IMR-90 (cell line): ENCODE measurements at regions of chr6 and their contacts with region 1.

Region 1: GRCh38 chr6:25369433-25370181 is 90.4 kb downstream of the CARMIL1 start:
- DNase-seq: no peak
- ATAC-seq: no peak
- H3K4me3 ChIP-seq: no peak overlapping the region
- H3K27ac ChIP-seq: no peak overlapping the region
- H3K4me1 ChIP-seq: no peaks in the 10 kb centered on the region; the same call in 1 of the 2 replicates
- H3K27me3 ChIP-seq: no peaks in the 10 kb centered on the region
- CTCF ChIP-seq: no peak
- POLR2A ChIP-seq: no peak
- RAD21 ChIP-seq: no peak

Region 2: DNA sequence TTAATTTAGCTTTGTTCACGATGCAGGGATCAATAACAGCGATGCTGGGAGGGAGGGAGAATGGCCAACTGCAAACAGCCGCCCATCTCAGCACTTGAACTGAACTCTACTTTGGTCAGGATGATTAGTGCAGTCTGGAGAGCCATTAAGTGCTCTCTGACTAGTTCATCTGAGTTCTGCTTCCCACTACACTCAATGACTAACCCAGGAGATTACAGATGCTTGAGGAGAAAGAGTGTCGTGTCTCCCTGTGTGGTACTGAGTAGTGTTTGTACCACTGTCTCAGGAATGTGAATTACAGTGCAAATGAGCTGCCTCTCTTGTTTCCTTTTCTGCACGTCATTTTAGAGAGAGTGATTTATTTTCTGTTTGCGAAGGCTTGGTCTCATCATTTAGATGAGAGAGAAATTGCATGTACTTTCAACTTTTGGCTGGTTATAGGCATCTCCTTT is 66.9 kb before region 1 on chr6:
- CTCF ChIA-PET with region 1: no interaction called
- POLR2A ChIA-PET with region 1: no interaction called
- dilution Hi-C with region 1: no loop called
- in situ Hi-C with region 1: no loop called
- intact Hi-C with region 1: loop called (anchors 5 kb)
- DNase-seq: peak; percentile 76
- ATAC-seq: peak; percentile 95
- H3K4me3 ChIP-seq: no peak overlapping the region
- H3K27ac ChIP-seq: peak overlapping the region; percentile 24; the same call in 1 of the 2 replicates
- H3K4me1 ChIP-seq: peaks cover 2% of the 10 kb centered on the region; the same call in 1 of the 2 replicates
- H3K27me3 ChIP-seq: no peaks in the 10 kb centered on the region
- CTCF ChIP-seq: no peak
- POLR2A ChIP-seq: no peak
- RAD21 ChIP-seq: no peak